Esophagus squamous epithelium (tissue), 5 donors: ENCODE measurements at regions of chr17 and their contacts with region 1.

Region 1: DNA sequence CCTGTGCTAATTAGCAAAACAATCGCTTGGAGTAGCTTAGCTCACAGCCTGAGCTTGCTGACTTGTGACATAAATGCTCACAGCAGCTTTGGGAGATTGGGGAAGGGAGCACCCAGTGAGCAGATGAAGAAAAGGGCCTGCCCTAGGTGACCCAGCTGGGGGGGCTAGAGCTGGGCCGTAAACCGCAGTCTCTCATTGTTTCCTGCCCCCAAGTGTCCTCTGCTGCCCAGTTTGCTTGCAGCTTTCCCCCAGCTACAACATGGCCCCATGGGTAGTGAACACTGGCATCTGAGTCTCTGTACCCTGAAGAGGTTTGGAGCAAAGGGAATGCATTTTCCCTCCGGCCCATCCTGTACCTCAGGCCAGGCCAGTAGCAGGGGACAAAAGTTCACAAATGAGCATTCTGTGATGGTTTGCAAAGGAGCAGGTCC is 349.4 kb downstream of the SLC39A11 start:
- DNase-seq: no peak
- H3K4me3 ChIP-seq: no peak overlapping the region
- H3K27ac ChIP-seq: no peak overlapping the region
- H3K4me1 ChIP-seq: no peaks in the 10 kb centered on the region
- H3K27me3 ChIP-seq: no peaks in the 10 kb centered on the region
- CTCF ChIP-seq: no peak
- POLR2A ChIP-seq: no peak

Region 2: DNA sequence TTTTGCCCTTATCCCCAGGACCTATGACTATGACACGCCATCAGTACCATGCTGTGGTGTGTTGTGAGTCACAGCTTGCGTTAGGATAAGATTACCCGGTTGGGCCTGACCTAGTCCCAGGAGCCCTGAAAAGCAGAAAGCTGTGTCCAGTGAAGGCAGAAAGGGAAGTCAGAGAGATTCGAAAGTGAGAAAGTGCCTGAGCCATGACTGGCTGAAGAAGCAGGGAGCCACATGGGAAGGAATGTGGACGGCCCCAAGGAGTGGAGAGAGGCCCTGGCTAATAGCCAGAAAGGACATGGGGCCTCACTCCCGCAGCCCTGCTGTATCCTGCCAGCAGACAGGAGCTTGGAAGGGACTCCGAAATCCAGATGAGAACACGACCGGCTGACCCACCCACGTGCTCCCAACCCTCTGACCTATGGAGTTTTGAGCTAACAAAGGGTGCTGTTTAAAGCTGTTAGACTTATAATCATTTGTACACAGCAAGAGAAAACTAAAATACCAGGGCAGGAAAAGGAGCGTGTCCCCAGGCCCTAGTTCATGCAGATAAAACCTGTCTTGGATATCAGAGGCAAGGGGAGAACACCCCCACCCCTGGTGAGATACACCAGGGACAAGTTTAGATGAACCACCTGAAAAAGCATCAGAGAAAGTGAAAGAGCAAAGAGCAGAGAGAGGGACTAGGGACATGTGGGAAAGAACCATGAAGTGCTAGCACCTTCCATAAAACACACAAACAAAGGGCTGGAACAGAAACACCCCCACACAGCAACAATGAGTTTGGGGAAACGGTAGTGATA is 234.1 kb after region 1 on chr17:
- intact Hi-C with region 1: loop called (anchors 10 kb)
- DNase-seq: no peak
- H3K4me3 ChIP-seq: no peak overlapping the region
- H3K27ac ChIP-seq: peak overlapping the region in 2 of 4 donors; percentile 14 to 29
- H3K4me1 ChIP-seq: peaks cover 0 to 20% (median 6%) of the 10 kb centered on the region in 3 donors
- H3K27me3 ChIP-seq: no peaks in the 10 kb centered on the region
- CTCF ChIP-seq: no peak
- POLR2A ChIP-seq: no peak

Region 3: DNA sequence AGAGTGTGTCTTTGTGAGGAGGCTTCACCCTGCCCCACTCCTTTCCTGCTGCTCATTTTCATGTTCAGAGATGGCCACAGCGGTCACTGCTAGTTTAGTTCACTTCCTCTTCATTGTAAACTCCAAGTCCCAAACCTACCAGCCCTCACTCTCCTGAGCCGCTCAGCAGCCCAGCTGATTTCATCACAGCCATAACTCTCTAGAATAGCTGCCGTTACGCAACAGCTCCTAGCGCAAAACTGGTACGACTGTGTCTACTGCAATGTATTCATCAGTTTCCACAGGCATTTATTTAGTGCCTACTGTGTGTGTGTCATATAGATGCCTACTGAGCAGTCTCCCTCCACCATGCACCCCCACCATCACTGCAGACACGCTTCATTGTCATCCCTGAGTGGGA is 1226.9 kb after region 1 on chr17:
- intact Hi-C with region 1: no loop called
- DNase-seq: no peak
- H3K4me3 ChIP-seq: no peak overlapping the region
- H3K27ac ChIP-seq: no peak overlapping the region
- H3K4me1 ChIP-seq: no peaks in the 10 kb centered on the region
- H3K27me3 ChIP-seq: peaks cover 0 to 64% (median 2%) of the 10 kb centered on the region in 4 donors
- CTCF ChIP-seq: no peak
- POLR2A ChIP-seq: no peak